Gastrocnemius medialis (tissue), 4 donors: ENCODE measurements at regions of chr13 and their contacts with region 1.

Region 1: DNA sequence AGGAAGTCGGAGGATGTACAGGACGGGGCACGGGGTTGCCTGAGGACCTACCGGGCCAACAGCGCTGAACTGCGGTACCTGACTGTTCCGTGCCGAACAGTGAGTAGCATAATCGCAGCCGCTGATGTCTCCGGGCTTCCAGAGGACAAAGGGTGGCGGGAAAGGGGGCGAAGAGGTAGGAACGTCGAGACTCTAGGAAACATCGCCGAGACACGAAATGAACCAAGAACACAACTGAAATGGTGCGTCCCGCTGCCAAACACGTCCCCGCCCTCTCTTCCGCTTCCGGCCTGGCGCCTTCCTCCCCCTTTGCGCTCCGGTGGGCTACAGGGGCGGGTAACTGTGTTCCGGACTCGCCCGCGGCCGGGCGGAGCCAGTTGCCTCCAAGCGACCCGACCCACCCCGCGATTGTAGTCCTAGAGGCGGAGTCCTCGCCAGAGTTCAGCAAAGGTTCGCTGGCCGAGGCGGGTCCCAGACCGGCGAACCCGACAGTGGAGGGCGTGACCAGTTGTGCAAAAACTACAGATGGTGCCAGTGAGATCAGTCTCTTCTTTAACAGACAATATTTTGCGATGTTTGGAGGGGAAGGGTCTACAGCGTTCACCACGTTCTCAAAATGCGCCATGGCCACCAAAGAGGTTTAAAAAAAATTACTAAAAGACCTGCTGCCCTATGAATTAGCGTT is at the start of gene MRPS31:
- DNase-seq: peak; percentile 89 to 94
- ATAC-seq: peak; percentile 93 to 97
- H3K4me3 ChIP-seq: peak within 1 kb of the TSS; percentile 74 to 95 (median 90)
- H3K27ac ChIP-seq: peak within 1 kb of the TSS; percentile 77 to 93 (median 90)
- H3K4me1 ChIP-seq: peaks cover 12 to 23% of the 10 kb centered on the region in 2 donors
- H3K27me3 ChIP-seq: no peaks in the 10 kb centered on the region
- CTCF ChIP-seq: peak in 2 of 5 experiments; percentile 11 to 30
- POLR2A ChIP-seq: peak; percentile 55 to 61
- total RNA-seq, gene MRPS31: 21.0 to 29.5 (median 24.8) TPM

Region 2: DNA sequence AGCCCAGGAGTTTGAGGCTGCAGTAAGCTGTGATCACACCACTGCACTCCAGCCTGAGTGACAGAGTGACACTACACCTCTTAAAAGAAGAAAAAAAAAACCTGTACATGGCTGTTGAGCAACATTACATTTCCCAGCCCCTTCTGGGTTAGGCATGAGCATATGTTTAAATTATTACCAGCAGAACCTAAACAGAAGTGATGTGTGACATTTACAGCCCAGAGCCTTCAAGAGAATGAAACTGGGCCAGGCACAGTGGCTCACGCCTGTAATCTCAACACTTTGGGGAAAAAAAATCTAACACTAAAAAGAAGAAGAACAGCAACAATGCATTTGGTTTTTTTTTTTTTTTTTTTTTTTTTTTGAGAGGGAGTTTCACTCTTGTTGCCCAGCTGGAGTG is 38.4 kb before region 1 on chr13:
- in situ Hi-C with region 1: no loop called
- intact Hi-C with region 1: no loop called
- DNase-seq: no peak
- ATAC-seq: no peak
- H3K4me3 ChIP-seq: no peak overlapping the region
- H3K27ac ChIP-seq: no peak overlapping the region
- H3K4me1 ChIP-seq: no peaks in the 10 kb centered on the region
- H3K27me3 ChIP-seq: no peaks in the 10 kb centered on the region
- CTCF ChIP-seq: no peak
- POLR2A ChIP-seq: no peak

Region 3: GRCh38 chr13:40789275-40790133 is 18.4 kb after region 1 on chr13 and contains the start of gene SLC25A15:
- in situ Hi-C with region 1: no loop called
- intact Hi-C with region 1: loop called (anchors 2 kb)
- DNase-seq: peak; percentile 25 to 67
- ATAC-seq: peak; percentile 84 to 85
- H3K4me3 ChIP-seq: peak within 1 kb of the TSS; percentile 55 to 99 (median 70)
- H3K27ac ChIP-seq: peak within 1 kb of the TSS; percentile 69 to 84 (median 78)
- H3K4me1 ChIP-seq: peaks cover 4 to 5% of the 10 kb centered on the region in 2 donors
- H3K27me3 ChIP-seq: no peaks in the 10 kb centered on the region
- CTCF ChIP-seq: peak in 3 of 5 experiments; percentile 23 to 38 (median 28)
- POLR2A ChIP-seq: peak in 1 of 2 donors; percentile 37
- total RNA-seq, gene SLC25A15: 4.3 to 19.3 (median 11.0) TPM